Activated naive CD4-positive, alpha-beta T cell treated with anti-CD3 and anti-CD28 coated beads, Interleukin-2, amount 10 ng/mL, durations not matched to agents 7 days and 5 days (primary cell): ENCODE measurements at regions of chr17 and their contacts with region 1.

Region 1: GRCh38 chr17:57849874-57850754 is at the start of gene MRPS23:
- DNase-seq: peak; percentile 98
- H3K4me3 Mint-ChIP-seq: peak within 1 kb of the TSS; percentile 85
- H3K27ac Mint-ChIP-seq: peak within 1 kb of the TSS; percentile 97
- H3K4me1 Mint-ChIP-seq: peaks cover 43% of the 10 kb centered on the region
- H3K27me3 Mint-ChIP-seq: peaks cover 8% of the 10 kb centered on the region

Region 2: DNA sequence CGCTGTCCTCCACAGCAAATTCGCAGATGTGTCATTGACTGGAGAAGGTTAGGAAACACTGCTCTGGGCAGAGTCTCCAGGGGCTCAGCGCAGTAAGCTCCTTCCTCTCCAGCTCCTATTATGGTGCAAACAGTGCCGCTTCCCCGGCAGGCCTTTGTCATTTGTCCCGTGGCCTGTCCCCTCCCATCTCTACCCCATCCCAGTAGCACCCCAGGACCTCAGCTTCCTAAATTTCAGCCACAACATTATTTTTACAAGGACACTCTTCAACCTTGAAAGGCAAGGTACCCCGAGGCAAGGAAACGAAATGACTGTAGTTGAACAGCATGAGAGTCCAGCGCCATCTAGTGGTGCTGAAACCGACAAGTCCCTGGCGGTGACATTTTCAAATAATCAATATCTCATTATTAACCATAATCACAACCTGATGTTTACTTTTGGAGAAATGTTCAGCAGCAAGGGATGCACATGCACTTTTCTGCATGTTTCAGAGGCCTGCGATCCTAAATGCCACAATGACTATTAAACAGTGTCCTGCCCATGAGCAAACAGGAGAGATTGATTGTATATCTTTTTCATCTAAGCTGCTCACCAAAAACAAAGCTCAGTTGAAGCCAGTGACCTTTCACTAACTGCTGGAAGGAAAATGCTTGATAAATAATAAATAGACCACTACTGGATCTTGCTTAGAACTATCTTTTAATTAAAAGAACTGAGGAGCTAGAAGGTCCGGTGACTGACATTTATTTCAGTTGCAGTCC is 16.8 kb before region 1 on chr17:
- CTCF ChIA-PET with region 1: interaction called, 18 read pairs
- DNase-seq: peak; percentile 79
- H3K4me3 Mint-ChIP-seq: no peak overlapping the region
- H3K27ac Mint-ChIP-seq: no peak overlapping the region
- H3K4me1 Mint-ChIP-seq: peaks cover 2% of the 10 kb centered on the region
- H3K27me3 Mint-ChIP-seq: peaks cover 6% of the 10 kb centered on the region

Region 3: GRCh38 chr17:57868007-57868909 is 18.1 kb after region 1 on chr17:
- CTCF ChIA-PET with region 1: no interaction called
- DNase-seq: peak; percentile 63
- H3K4me3 Mint-ChIP-seq: no peak overlapping the region
- H3K27ac Mint-ChIP-seq: peak overlapping the region; percentile 84
- H3K4me1 Mint-ChIP-seq: peaks cover 27% of the 10 kb centered on the region
- H3K27me3 Mint-ChIP-seq: peaks cover 74% of the 10 kb centered on the region